Heart right ventricle (tissue), 16 donors: ENCODE measurements at regions of chr16 and their contacts with region 1.

Region 1: DNA sequence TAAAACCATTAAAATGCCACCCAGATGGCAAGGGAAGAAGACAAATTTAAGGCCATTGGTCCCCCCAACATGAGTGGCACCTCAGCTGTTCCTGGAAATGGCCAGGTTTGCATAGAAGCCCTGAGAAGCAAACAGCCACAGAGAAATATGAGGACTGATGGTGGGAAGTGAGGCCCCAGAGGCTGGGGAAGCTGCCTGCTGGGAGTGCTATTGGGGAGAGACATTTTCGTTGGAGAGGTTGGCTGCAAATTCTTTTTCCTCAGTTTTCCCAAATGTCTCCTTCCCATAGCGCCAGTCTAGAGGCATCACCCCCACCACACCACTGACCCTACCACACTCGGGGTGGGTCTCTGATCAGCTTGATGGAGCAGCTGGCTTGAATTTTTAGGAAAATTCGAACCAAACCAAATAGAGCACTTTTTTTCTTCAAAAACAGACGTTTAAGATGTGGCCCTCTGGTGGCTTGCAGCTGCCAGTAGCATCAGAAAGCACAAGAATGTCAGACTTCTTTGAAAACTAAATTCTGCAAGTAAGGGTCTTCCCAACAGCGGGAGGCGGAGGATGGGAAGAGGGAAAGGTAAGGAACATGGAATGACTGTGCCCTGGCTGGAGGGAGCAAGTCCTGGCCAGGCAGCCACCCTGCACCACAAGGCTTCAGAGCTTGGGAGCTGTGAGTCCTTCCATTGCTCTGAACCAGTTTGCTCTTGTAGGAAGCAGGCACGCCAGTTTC is 13.2 kb upstream of the SLC12A3 start:
- DNase-seq: no peak
- ATAC-seq: no peak
- H3K4me3 ChIP-seq: no peak overlapping the region
- H3K27ac ChIP-seq: no peak overlapping the region
- H3K4me1 ChIP-seq: peaks cover 0 to 28% (median 21%) of the 10 kb centered on the region in 9 donors
- H3K27me3 ChIP-seq: no peaks in the 10 kb centered on the region
- CTCF ChIP-seq: no peak

Region 2: GRCh38 chr16:56903866-56904265 is 52.0 kb after region 1 on chr16:
- intact Hi-C with region 1: loop called in 1 of 10 experiments (anchors 5 kb)
- DNase-seq: no peak
- ATAC-seq: no peak
- H3K4me3 ChIP-seq: no peak overlapping the region
- H3K27ac ChIP-seq: no peak overlapping the region
- H3K4me1 ChIP-seq: no peaks in the 10 kb centered on the region
- H3K27me3 ChIP-seq: no peaks in the 10 kb centered on the region
- CTCF ChIP-seq: no peak

Region 3: GRCh38 chr16:57462209-57462977 is 610.6 kb after region 1 on chr16 and contains the start of gene POLR2C:
- intact Hi-C with region 1: no loop called
- DNase-seq: peak; percentile 89 to 91
- ATAC-seq: peak; percentile 81 to 95 (median 92)
- H3K4me3 ChIP-seq: peak within 1 kb of the TSS; percentile 69 to 99 (median 88)
- H3K27ac ChIP-seq: peak within 1 kb of the TSS; percentile 70 to 90 (median 87)
- H3K4me1 ChIP-seq: peaks cover 7 to 29% (median 21%) of the 10 kb centered on the region in 9 donors
- H3K27me3 ChIP-seq: no peaks in the 10 kb centered on the region
- CTCF ChIP-seq: peak; percentile 92 to 99 (median 95)
- total RNA-seq, gene POLR2C: 40.2 to 56.7 (median 47.2) TPM